ENCODE measurements at regions of chr4 and their contacts with region 1.

Region 1: DNA sequence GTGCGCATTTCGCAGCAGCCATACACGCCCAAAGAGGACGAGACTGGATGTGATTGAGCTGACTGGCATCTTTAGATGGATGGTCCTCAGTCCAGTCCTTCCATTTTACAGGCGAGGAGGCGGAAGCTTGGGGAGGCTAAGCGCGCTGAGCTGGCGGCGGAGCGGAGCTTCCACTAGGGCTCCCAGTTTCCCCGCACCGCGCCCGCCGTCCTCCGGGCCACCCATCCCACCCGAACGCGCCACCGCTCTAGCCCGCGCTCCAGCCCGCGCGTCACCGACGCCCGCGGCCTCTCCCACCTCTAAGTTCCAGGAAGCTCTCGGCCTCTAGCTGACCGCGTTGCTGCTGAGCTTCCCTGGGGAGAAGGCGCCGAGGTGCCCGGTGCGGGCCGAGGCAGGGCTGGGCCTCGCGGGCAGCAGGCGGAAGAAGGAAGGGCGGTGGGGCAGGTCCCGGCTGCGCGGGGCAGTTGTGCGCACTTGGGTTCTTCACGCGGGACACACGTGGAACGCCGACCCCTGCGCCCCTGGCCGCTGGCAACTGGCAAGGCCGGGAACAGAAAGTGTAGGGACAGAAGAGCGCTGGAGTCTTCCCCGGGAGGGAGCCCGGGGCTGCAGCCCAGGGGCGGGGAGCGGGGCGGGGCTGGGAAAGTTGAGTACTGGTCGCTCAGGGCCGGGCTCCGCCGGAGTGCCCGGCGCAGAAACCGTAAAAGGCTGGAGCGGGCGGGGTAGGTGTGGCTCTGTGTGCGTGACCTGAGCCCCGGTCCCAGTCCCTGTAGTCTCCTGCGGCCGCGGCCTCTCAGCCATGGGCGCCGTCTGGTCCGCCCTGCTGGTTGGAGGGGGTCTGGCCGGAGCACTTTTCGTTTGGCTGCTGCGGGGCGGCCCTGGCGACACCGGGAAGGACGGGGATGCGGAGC is at the start of gene STBD1:
- DNase-seq: peak; percentile 64
- H3K27ac ChIP-seq: peak within 1 kb of the TSS; percentile 82
- CTCF ChIP-seq: no peak

Region 2: DNA sequence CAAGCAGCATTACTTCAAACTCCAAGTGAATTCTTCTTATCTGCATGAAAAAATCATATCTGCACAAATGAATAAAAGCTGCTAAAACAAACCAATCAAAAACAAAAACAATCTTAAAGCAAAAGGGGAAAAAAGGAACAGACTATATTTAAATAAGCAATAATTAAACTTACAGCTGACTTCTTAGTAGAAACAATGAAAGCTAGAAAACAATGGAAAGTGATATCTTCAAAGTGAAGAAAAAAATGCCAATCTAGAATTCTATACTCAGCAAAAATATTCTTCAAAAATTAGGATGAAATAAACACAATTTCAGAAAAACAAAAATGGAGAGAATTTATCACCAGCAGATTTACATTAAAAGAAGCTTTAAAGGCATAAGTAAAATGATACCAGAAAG is 20.3 kb after region 1 on chr4:
- CTCF ChIA-PET with region 1: no interaction called
- POLR2A ChIA-PET with region 1: no interaction called
- DNase-seq: no peak
- H3K27ac ChIP-seq: no peak overlapping the region
- CTCF ChIP-seq: no peak

Region 3: GRCh38 chr4:76386566-76387295 is 80.5 kb after region 1 on chr4:
- CTCF ChIA-PET with region 1: no interaction called
- POLR2A ChIA-PET with region 1: interaction called, 10 read pairs
- DNase-seq: no peak
- H3K27ac ChIP-seq: no peak overlapping the region
- CTCF ChIP-seq: no peak

Region 4: GRCh38 chr4:76550966-76551780 is 244.9 kb after region 1 on chr4:
- CTCF ChIA-PET with region 1: no interaction called
- POLR2A ChIA-PET with region 1: no interaction called
- DNase-seq: no peak
- H3K27ac ChIP-seq: no peak overlapping the region
- CTCF ChIP-seq: no peak

Measured in RWPE1 (cell line).